Activated T-helper 1 cell treated with anti-CD3 and anti-CD28 coated beads, Interleukin-12 subunit alpha, Interleukin-12 subunit beta, Interleukin-2, Interleukin-4 antibody, amounts not matched to agents 30 ng/mL and 10 ng/mL and 1 ng/mL, durations not matched to agents 14 hours and 24 hours and 36 hours (primary cell): ENCODE measurements at regions of chr12 and their contacts with region 1.

Region 1: GRCh38 chr12:46268590-46269558 is at the start of gene SLC38A1:
- DNase-seq: peak; percentile 85
- H3K4me3 Mint-ChIP-seq: no peak within 1 kb of the TSS
- H3K27ac Mint-ChIP-seq: no peak within 1 kb of the TSS
- H3K4me1 Mint-ChIP-seq: peaks cover 28% of the 10 kb centered on the region
- H3K27me3 Mint-ChIP-seq: no peaks in the 10 kb centered on the region
- total RNA-seq, gene SLC38A1: 172 and 182 TPM in 2 replicates

Region 2: DNA sequence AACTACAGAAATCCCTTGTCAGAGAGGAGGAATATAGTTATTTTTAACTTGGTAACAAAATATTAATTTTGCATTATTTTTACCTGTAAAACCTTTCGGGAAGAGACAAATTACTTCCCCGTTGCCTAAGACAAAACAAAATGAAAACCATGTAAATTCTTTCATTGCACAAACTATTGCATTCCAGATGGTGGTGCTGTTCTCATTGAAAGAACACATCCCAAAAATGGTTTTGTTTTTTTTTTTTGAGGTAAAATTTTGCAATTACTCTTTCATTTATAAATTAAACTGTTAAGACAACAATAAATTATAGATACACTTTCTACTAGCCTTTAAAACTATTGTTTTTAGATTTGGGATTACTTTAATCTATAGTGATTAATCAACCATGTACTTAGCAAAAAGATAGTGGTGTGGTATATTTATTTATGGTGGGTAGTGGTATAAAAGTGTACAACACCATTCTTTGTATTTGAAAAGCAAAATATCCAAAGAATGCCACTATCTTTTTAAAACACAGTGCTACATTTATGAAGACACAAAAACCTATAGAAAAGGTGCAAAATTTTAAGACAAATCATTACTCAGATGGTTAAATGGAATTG is 115.5 kb before region 1 on chr12:
- intact Hi-C with region 1: loop called (anchors 1 kb)
- DNase-seq: no peak
- H3K4me3 Mint-ChIP-seq: no peak overlapping the region
- H3K27ac Mint-ChIP-seq: no peak overlapping the region
- H3K4me1 Mint-ChIP-seq: no peaks in the 10 kb centered on the region
- H3K27me3 Mint-ChIP-seq: peaks cover 6% of the 10 kb centered on the region

Region 3: GRCh38 chr12:46164169-46164761 is 104.6 kb before region 1 on chr12:
- intact Hi-C with region 1: no loop called
- DNase-seq: no peak
- H3K4me3 Mint-ChIP-seq: no peak overlapping the region
- H3K27ac Mint-ChIP-seq: no peak overlapping the region
- H3K4me1 Mint-ChIP-seq: no peaks in the 10 kb centered on the region
- H3K27me3 Mint-ChIP-seq: no peaks in the 10 kb centered on the region

Region 4: GRCh38 chr12:46217541-46218321 is 51.1 kb before region 1 on chr12:
- intact Hi-C with region 1: loop called (anchors 1 kb)
- DNase-seq: peak; percentile 64
- H3K4me3 Mint-ChIP-seq: peak overlapping the region; percentile 68
- H3K27ac Mint-ChIP-seq: peak overlapping the region; percentile 92
- H3K4me1 Mint-ChIP-seq: peaks cover 97% of the 10 kb centered on the region
- H3K27me3 Mint-ChIP-seq: no peaks in the 10 kb centered on the region

Region 5: GRCh38 chr12:46303039-46303666 is 34.3 kb after region 1 on chr12:
- intact Hi-C with region 1: loop called (anchors 1 kb)
- DNase-seq: no peak
- H3K4me3 Mint-ChIP-seq: no peak overlapping the region
- H3K27ac Mint-ChIP-seq: no peak overlapping the region
- H3K4me1 Mint-ChIP-seq: no peaks in the 10 kb centered on the region
- H3K27me3 Mint-ChIP-seq: peaks cover 14% of the 10 kb centered on the region

Region 6: GRCh38 chr12:46546634-46547286 is 277.9 kb after region 1 on chr12:
- intact Hi-C with region 1: loop called (anchors 2 kb)
- DNase-seq: peak; percentile 19
- H3K4me3 Mint-ChIP-seq: peak overlapping the region; percentile 34
- H3K27ac Mint-ChIP-seq: peak overlapping the region; percentile 89
- H3K4me1 Mint-ChIP-seq: peaks cover 58% of the 10 kb centered on the region
- H3K27me3 Mint-ChIP-seq: no peaks in the 10 kb centered on the region